Gastrocnemius medialis (tissue), 4 donors: ENCODE measurements at regions of chr19 and their contacts with region 1.

Region 1: GRCh38 chr19:42433503-42434260 is 6.5 kb upstream of the LIPE start:
- DNase-seq: peak; percentile 48 to 67
- ATAC-seq: peak; percentile 78 to 85
- H3K4me3 ChIP-seq: no peak overlapping the region
- H3K27ac ChIP-seq: peak overlapping the region; percentile 37 to 65 (median 57)
- H3K4me1 ChIP-seq: peaks cover 2 to 8% of the 10 kb centered on the region in 2 donors
- H3K27me3 ChIP-seq: no peaks in the 10 kb centered on the region
- CTCF ChIP-seq: peak; percentile 28 to 64 (median 55)
- POLR2A ChIP-seq: no peak

Region 2: DNA sequence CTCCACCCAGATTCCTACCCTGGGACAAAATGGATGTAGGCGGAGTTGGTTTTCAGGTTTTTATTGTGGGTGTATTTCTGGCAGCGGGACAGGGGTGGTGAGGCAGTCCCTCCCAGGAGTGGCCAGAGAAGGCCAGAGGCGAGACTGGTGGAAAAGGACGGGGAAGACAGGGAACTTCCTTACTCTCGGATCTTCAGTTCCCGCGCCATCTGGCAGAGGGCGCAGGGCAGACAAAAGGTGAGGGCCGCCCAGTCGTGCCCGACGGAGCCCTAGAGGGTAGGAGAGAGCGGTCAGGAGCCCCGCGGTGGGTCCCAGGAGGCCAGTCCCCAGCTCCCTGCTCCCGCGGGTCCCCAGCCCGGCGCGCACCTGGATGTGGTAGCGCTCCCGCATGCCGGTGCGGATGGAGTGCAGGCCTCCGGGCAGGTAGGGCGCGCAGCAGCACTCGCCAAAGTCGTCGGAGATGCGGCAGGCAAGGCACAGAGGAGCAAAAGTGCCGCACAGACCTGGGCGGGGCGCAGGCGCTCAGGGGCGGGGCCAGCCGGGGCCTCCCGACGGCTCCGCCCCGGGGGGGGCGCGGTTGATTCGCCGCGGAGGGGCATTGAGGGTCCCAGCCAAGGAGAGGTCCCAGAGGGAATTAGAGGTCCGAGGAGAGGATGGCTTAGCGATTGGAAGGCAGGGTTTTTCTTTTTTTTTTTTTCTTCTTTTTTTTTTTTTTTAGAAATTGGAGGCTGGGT is 46.5 kb before region 1 on chr19:
- in situ Hi-C with region 1: no loop called
- intact Hi-C with region 1: loop called (anchors 5 kb)
- DNase-seq: no peak
- ATAC-seq: peak; percentile 41 to 62
- H3K4me3 ChIP-seq: peak overlapping the region; percentile 43 to 57 (median 46)
- H3K27ac ChIP-seq: peak overlapping the region in 2 of 4 donors; percentile 27 to 39
- H3K4me1 ChIP-seq: peaks cover 0 to 7% of the 10 kb centered on the region in 2 donors
- H3K27me3 ChIP-seq: peaks cover 10 to 38% (median 33%) of the 10 kb centered on the region in 3 donors
- CTCF ChIP-seq: peak in 3 of 5 experiments; percentile 36 to 50 (median 47)
- POLR2A ChIP-seq: no peak